MCF 10A (cell line): ENCODE measurements at regions of chr2 and their contacts with region 1.

Region 1: DNA sequence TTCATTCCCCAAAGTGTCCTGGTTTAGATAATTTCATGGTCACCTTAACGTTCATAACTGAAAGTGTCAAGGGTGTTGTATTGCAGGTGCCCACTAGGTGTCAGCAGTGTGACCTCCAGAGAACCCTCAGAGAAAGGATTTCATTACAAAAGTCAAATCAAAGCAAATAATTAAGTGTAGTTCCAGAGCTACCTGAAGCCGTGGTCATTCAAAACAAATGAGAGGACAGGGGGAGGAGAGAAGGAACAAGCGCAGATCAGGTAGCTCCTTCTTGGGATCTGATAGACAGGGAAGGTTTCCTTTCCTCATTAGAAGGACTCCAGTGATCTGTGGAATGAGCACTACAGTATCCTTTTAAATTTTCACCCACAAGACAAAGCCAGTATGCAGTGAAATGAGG is at the start of gene SLC9A4:
- DNase-seq: peak; percentile 62
- H3K4me3 Mint-ChIP-seq: no peak within 1 kb of the TSS
- H3K27ac Mint-ChIP-seq: no peak within 1 kb of the TSS
- H3K4me1 Mint-ChIP-seq: no peaks in the 10 kb centered on the region
- H3K27me3 Mint-ChIP-seq: peaks cover 11% of the 10 kb centered on the region
- CTCF ChIP-seq: peak; percentile 79
- total RNA-seq, gene SLC9A4: 0.07 TPM in 1 of 2 replicates, not detected in the other

Region 2: DNA sequence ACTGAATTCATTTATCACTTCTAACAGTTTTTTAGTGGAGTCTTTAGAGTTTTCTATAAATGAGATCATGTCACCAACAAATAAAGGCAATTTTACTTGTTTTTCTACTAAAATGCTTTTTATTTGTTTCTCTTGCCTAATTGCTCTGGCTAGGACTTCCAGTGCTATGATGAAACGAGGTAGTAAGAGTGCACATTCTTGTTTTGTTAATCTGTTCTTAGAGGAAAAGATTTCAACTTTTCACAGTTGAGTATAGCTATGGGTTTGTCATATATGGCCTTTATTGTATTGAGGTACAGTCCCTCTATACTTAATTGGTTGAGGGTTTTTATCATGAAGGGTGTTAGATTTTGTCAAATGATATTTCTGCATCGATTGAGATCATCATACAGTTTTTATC is 44.4 kb before region 1 on chr2:
- CTCF ChIA-PET with region 1: no interaction called
- POLR2A ChIA-PET with region 1: no interaction called
- intact Hi-C with region 1: no loop called
- DNase-seq: no peak
- H3K4me3 Mint-ChIP-seq: no peak overlapping the region
- H3K27ac Mint-ChIP-seq: no peak overlapping the region
- H3K4me1 Mint-ChIP-seq: no peaks in the 10 kb centered on the region
- H3K27me3 Mint-ChIP-seq: no peaks in the 10 kb centered on the region
- CTCF ChIP-seq: no peak

Region 3: DNA sequence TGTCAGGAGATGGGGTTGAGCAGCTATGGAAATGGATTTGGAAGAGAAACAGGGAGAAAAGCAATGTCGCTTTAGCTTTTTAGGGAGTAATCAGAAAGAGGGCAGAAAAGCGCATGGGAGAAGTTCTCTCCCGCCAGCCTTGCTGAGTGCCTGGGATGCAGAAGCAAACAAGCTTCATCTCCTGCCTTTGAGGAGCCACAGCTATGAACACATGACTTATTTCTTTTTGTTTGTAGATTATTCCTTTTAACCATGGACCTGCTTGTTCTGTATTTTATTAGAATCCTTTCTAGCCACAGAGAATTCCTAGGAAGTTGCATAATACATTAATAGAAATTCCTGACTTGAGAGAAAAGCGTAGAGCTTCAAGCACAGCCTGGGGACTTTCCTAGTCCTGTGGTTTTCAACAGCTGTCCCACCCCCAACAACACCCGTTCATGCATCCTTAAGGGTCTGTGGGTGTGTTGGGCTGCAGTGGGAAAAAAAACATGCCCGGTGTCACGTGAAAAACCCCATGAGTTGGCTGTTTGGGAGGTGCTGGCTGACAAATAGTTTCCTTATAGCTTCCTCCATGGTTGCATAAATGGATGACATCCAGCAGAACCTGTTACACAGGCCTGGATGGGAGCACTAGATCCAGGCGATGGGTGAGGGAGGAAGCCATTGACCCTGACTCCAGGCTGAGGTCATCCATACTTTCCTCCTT is 14.9 kb after region 1 on chr2:
- CTCF ChIA-PET with region 1: interaction called, 53 read pairs
- POLR2A ChIA-PET with region 1: interaction called, 3 read pairs
- intact Hi-C with region 1: no loop called
- DNase-seq: peak; percentile 39
- H3K4me3 Mint-ChIP-seq: no peak overlapping the region
- H3K27ac Mint-ChIP-seq: no peak overlapping the region
- H3K4me1 Mint-ChIP-seq: peaks cover 6% of the 10 kb centered on the region
- H3K27me3 Mint-ChIP-seq: no peaks in the 10 kb centered on the region
- CTCF ChIP-seq: no peak

Region 4: DNA sequence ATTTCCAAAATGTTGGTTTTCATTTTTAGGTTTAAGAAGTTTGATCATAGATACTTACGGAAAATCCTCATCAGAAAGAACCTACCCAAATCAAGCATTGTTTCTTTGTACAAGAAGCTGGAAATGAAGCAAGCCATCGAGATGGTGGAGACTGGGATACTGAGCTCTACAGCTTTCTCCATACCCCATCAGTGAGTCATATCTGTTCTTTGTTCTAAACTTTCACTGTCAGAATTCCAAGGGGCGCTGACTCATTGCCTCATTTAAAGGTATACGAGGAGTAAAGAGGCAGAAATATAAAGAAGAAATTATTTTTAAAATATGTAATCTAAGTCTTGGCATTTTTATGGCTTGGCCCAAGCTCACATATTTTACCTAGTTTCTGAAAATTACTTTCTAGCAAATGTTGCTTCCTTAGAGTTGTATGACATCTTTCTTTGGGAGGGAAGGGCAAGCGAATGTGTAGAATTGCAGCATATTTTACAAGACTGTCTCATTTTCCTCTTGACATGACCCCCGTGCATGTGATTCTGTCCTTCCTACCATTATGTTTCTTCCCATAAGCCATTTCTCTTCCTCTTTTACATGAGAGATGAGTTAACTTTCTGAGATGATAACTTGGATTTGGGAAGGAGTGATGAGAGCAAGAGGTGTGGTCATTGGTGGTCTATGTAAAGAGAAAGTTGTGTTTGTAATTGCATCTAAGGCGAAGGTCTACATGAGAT is 41.2 kb after region 1 on chr2:
- CTCF ChIA-PET with region 1: interaction called, 24 read pairs
- POLR2A ChIA-PET with region 1: interaction called, 3 read pairs
- intact Hi-C with region 1: no loop called
- DNase-seq: peak; percentile 95
- H3K4me3 Mint-ChIP-seq: no peak overlapping the region
- H3K27ac Mint-ChIP-seq: peak overlapping the region; percentile 63
- H3K4me1 Mint-ChIP-seq: peaks cover 24% of the 10 kb centered on the region
- H3K27me3 Mint-ChIP-seq: no peaks in the 10 kb centered on the region
- CTCF ChIP-seq: no peak

Region 5: DNA sequence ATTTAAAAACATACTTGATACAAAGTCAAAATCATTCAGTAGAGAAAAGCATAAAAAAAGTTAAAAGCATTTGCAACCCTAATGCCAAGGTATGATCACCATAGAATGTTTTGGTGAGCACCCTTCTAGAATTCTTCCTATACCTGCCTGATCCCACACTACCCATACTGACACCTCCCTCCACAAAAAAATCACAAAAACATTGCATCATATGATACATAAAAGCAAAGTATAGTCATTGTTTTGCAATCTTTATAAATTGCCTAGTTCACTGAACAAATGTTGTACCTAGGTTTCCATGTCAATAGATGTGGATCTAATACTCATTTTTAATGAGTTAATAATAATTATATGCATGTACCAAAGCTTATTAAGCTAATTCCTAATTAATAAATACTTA is 54.1 kb after region 1 on chr2:
- CTCF ChIA-PET with region 1: interaction called, 24 read pairs
- POLR2A ChIA-PET with region 1: no interaction called
- intact Hi-C with region 1: no loop called
- DNase-seq: no peak
- H3K4me3 Mint-ChIP-seq: no peak overlapping the region
- H3K27ac Mint-ChIP-seq: no peak overlapping the region
- H3K4me1 Mint-ChIP-seq: no peaks in the 10 kb centered on the region
- H3K27me3 Mint-ChIP-seq: peaks cover 26% of the 10 kb centered on the region
- CTCF ChIP-seq: no peak

Region 6: GRCh38 chr2:102592597-102592996 is 119.6 kb after region 1 on chr2:
- CTCF ChIA-PET with region 1: interaction called, 31 read pairs
- POLR2A ChIA-PET with region 1: no interaction called
- intact Hi-C with region 1: loop called (anchors 1 kb)
- DNase-seq: peak; percentile 42
- H3K4me3 Mint-ChIP-seq: no peak overlapping the region
- H3K27ac Mint-ChIP-seq: no peak overlapping the region
- H3K4me1 Mint-ChIP-seq: no peaks in the 10 kb centered on the region
- H3K27me3 Mint-ChIP-seq: peaks cover 11% of the 10 kb centered on the region
- CTCF ChIP-seq: peak; percentile 61

Region 7: DNA sequence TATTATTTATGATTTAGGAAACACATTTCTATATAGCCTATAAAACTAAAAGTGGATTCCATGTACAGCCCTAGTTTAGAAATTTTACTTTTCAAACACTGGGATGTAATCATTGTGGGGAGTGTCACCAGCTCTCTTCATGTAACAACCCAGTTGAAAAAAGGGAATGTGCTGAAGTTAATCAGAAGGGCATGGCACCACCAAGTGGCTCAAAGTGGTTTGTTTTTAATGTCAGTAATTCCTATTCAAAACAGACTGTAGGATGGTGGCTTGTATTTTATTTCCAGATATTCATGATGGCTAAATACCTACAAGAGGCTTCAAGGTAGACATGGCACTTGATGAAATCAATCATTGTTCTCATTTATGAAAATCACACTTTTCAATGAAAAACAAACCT is 230.7 kb after region 1 on chr2:
- CTCF ChIA-PET with region 1: interaction called, 113 read pairs
- POLR2A ChIA-PET with region 1: no interaction called
- intact Hi-C with region 1: loop called (anchors 1 kb)
- DNase-seq: peak; percentile 35
- H3K4me3 Mint-ChIP-seq: no peak overlapping the region
- H3K27ac Mint-ChIP-seq: no peak overlapping the region
- H3K4me1 Mint-ChIP-seq: peaks cover under 1% of the 10 kb centered on the region
- H3K27me3 Mint-ChIP-seq: no peaks in the 10 kb centered on the region
- CTCF ChIP-seq: peak; percentile 53

Region 8: GRCh38 chr2:102806250-102806837 is 333.3 kb after region 1 on chr2:
- CTCF ChIA-PET with region 1: interaction called, 7 read pairs
- POLR2A ChIA-PET with region 1: no interaction called
- intact Hi-C with region 1: loop called (anchors 5 kb)
- DNase-seq: peak; percentile 76
- H3K4me3 Mint-ChIP-seq: no peak overlapping the region
- H3K27ac Mint-ChIP-seq: no peak overlapping the region
- H3K4me1 Mint-ChIP-seq: no peaks in the 10 kb centered on the region
- H3K27me3 Mint-ChIP-seq: no peaks in the 10 kb centered on the region
- CTCF ChIP-seq: peak; percentile 73